ENCODE measurements at regions of chr1 and their contacts with region 1.

Region 1: DNA sequence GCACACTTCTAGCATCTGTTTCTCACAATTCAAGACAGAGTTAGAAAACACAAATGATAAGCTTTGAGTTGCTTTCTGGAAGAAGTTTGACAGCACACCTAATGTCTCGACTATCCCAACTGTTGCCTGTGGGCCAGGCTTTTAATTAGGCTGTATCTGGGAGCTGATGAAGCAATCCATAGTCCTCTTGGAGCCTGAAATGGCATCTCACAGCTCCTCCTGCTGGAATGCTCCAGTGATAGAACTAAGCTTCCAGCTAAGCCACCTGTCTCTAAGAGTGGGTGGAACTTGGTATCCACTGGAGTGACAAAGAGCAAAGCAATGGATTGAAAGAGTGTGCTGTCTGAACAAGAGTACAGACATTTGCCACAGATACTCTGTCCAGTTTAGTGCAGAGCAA is 605.3 kb upstream of the NR5A2 start:
- DNase-seq: no peak

Region 2: GRCh38 chr1:199463521-199464128 is 41.4 kb after region 1 on chr1:
- intact Hi-C with region 1: no loop called
- DNase-seq: no peak

Region 3: GRCh38 chr1:200323918-200324317 is 901.7 kb after region 1 on chr1:
- intact Hi-C with region 1: loop called in 1 of 2 experiments (anchors 10 kb)
- DNase-seq: no peak

Measured in posterior vena cava (tissue), 2 donors.